Natural killer cell (primary cell): ENCODE measurements at regions of chr14 and their contacts with region 1.

Region 1: DNA sequence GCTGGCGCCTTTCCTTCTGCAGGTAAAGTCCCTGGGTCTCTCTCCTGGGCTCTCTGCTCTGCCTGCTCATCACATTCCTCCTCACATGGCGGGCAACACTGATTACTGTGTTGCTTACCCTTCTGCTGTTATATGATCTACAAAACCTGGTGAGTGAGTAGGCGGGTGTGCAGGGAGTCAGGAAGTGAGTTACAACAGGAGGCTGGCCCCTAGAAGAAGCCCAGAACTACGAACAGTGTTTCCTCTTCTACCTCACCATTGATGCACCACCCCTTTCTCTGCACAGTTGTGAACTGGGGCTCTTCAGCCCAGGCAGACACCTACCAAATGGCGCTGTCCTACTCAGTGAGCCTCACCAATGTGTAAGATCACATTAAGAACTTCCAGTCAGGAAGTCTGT is 4.9 kb upstream of the KLHL33 start:
- DNase-seq: peak in 1 of 2 donors; percentile 56
- ATAC-seq: peak; percentile 39 to 99 (median 77)
- H3K4me3 ChIP-seq: no peak overlapping the region
- H3K4me3 Mint-ChIP-seq: no peak overlapping the region
- H3K27ac ChIP-seq: no peak overlapping the region
- H3K27ac Mint-ChIP-seq: peak overlapping the region; percentile 32 to 68
- H3K4me1 ChIP-seq: peaks cover 28% of the 10 kb centered on the region
- H3K4me1 Mint-ChIP-seq: peaks cover 8 to 9% of the 10 kb centered on the region in 2 donors
- H3K27me3 ChIP-seq: no peaks in the 10 kb centered on the region
- H3K27me3 Mint-ChIP-seq: no peaks in the 10 kb centered on the region
- CTCF ChIP-seq: no peak

Region 2: DNA sequence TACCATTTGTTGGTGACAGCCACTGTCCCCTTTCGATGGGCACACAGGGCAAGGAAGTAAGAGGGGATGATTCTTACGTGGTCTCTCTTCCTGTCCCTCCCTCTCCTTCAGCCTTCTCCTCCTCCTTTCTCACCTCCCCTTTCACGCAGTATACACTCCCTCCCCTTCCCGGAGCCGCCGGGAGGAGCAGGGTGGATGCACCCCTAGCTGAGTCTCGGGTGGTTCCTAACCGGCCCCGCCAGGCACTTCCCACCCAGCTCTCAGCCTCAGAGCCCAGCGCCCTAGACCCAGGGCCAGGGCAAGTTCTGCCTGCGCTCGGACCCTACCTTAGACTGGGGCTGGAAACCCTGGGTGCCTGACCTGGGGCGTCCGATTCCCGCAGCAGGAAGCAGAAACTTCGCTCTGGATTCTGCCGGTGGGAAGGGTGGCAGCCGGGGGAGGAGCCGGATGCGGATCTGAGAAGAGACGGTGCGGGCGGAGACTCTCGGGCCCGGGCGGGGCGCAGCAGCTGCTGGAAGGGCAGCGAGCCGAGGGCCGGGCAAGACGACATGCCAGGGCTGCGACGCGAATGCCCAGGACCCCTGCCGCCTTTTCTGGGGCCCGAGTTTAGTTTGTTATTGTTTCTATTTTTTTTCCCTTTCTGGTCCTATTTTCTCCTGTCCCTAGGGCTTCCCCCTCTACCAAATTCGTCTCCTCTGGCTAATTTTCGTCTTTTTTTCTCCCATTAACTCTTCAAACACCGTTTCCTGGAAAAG is 27.7 kb before region 1 on chr14 and contains the start of gene TEP1:
- intact Hi-C with region 1: loop called (anchors 1 kb)
- DNase-seq: peak; percentile 64 to 82
- ATAC-seq: peak; percentile 73 to 82 (median 76)
- H3K4me3 ChIP-seq: peak within 1 kb of the TSS; percentile 97
- H3K4me3 Mint-ChIP-seq: peak within 1 kb of the TSS; percentile 98
- H3K27ac ChIP-seq: peak within 1 kb of the TSS; percentile 94
- H3K27ac Mint-ChIP-seq: peak within 1 kb of the TSS; percentile 91 to 96
- H3K4me1 ChIP-seq: peaks cover 9% of the 10 kb centered on the region
- H3K4me1 Mint-ChIP-seq: peaks cover 35 to 53% of the 10 kb centered on the region in 2 donors
- H3K27me3 ChIP-seq: no peaks in the 10 kb centered on the region
- H3K27me3 Mint-ChIP-seq: no peaks in the 10 kb centered on the region
- CTCF ChIP-seq: no peak
- total RNA-seq, gene TEP1: 76.3 to 83.2 (median 80.8) TPM

Region 3: GRCh38 chr14:20427231-20428009 is 13.5 kb before region 1 on chr14:
- intact Hi-C with region 1: no loop called
- DNase-seq: peak in 1 of 2 donors; percentile 21
- ATAC-seq: peak in 2 of 3 donors; percentile 58
- H3K4me3 ChIP-seq: no peak overlapping the region
- H3K4me3 Mint-ChIP-seq: peak overlapping the region; percentile 54
- H3K27ac ChIP-seq: peak overlapping the region; percentile 60
- H3K27ac Mint-ChIP-seq: peak overlapping the region; percentile 74 to 76
- H3K4me1 ChIP-seq: peaks cover 34% of the 10 kb centered on the region
- H3K4me1 Mint-ChIP-seq: peaks cover 23 to 28% of the 10 kb centered on the region in 2 donors
- H3K27me3 ChIP-seq: no peaks in the 10 kb centered on the region
- H3K27me3 Mint-ChIP-seq: no peaks in the 10 kb centered on the region
- CTCF ChIP-seq: no peak

Region 4: DNA sequence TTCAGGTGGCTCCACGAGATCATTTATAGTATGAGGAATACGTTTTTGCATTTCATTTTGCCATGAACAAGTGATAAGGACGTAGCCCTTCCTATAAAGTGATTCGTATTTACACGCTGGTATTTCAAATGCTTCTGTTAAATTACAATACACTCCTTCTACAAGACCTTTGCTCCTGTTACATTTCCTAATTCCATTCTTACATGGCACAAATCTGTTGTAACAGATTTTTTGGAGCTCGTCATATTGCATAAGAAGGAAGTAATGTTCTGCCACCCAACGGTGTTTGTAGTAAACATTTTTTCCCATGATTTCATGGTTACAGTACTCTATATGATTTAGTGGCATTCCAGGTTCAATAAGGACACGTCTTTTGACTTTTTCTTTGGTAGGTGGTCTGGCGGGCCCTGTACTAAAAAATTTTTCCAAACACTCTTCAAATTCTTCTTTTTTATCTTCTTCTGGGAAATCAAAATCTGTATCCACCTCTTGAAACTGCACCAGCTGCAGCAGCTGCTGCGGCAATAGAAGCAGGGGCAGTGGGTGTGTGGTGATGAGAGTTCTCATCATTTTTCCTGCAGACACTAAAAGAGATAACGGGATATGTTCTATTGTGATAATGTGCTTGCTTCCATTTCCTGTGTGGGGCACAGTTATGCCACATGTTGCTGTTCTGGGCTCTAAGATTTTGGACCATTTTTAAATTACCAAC is 115.8 kb after region 1 on chr14:
- intact Hi-C with region 1: no loop called
- DNase-seq: no peak
- ATAC-seq: no peak
- H3K4me3 ChIP-seq: no peak overlapping the region
- H3K4me3 Mint-ChIP-seq: no peak overlapping the region
- H3K27ac ChIP-seq: no peak overlapping the region
- H3K27ac Mint-ChIP-seq: no peak overlapping the region
- H3K4me1 ChIP-seq: no peaks in the 10 kb centered on the region
- H3K4me1 Mint-ChIP-seq: no peaks in the 10 kb centered on the region
- H3K27me3 ChIP-seq: no peaks in the 10 kb centered on the region
- H3K27me3 Mint-ChIP-seq: peaks cover 5 to 9% of the 10 kb centered on the region in 2 donors
- CTCF ChIP-seq: no peak

Region 5: GRCh38 chr14:20644520-20644919 is 203.6 kb after region 1 on chr14:
- intact Hi-C with region 1: no loop called
- DNase-seq: no peak
- ATAC-seq: no peak
- H3K4me3 ChIP-seq: no peak overlapping the region
- H3K4me3 Mint-ChIP-seq: no peak overlapping the region
- H3K27ac ChIP-seq: no peak overlapping the region
- H3K27ac Mint-ChIP-seq: no peak overlapping the region
- H3K4me1 ChIP-seq: no peaks in the 10 kb centered on the region
- H3K4me1 Mint-ChIP-seq: no peaks in the 10 kb centered on the region
- H3K27me3 ChIP-seq: peaks cover 4% of the 10 kb centered on the region
- H3K27me3 Mint-ChIP-seq: peaks cover 32 to 56% of the 10 kb centered on the region in 2 donors
- CTCF ChIP-seq: no peak

Region 6: GRCh38 chr14:20682435-20683124 is 241.7 kb after region 1 on chr14:
- intact Hi-C with region 1: no loop called
- DNase-seq: peak; percentile 68 to 93
- ATAC-seq: peak; percentile 61 to 76 (median 64)
- H3K4me3 ChIP-seq: peak overlapping the region; percentile 95
- H3K4me3 Mint-ChIP-seq: no peak overlapping the region
- H3K27ac ChIP-seq: peak overlapping the region; percentile 99
- H3K27ac Mint-ChIP-seq: no peak overlapping the region
- H3K4me1 ChIP-seq: peaks cover 44% of the 10 kb centered on the region
- H3K4me1 Mint-ChIP-seq: no peaks in the 10 kb centered on the region
- H3K27me3 ChIP-seq: no peaks in the 10 kb centered on the region
- H3K27me3 Mint-ChIP-seq: no peaks in the 10 kb centered on the region
- CTCF ChIP-seq: no peak